ENCODE measurements at regions of chr13 and their contacts with region 1.

Region 1: GRCh38 chr13:20828539-20829364 is 55.0 kb upstream of the EEF1AKMT1 start:
- DNase-seq: peak; percentile 3 to 40
- ATAC-seq: peak; percentile 44 to 54; a peak in 2 of 6 replicates
- H3K4me3 ChIP-seq: peak overlapping the region; percentile 30; the same call in 2 of the 3 replicates
- H3K27ac ChIP-seq: peak overlapping the region; percentile 13 to 39; a peak in 2 of 6 replicates
- H3K4me1 ChIP-seq: 0 out of 3 replicates have a peak, but pooled peaks cover 3% of the 10 kb centered on the region
- CTCF ChIP-seq: peak; percentile 66
- EP300 ChIP-seq: no peak
- POLR2A ChIP-seq: no peak
- RAD21 ChIP-seq: peak; percentile 57 to 58; a peak in 4 of 5 replicates

Region 2: GRCh38 chr13:20696073-20696472 is 132.7 kb before region 1 on chr13:
- CTCF ChIA-PET with region 1: no interaction called
- POLR2A ChIA-PET with region 1: no interaction called
- DNase-seq: no peak
- ATAC-seq: no peak
- H3K4me3 ChIP-seq: no peak overlapping the region
- H3K27ac ChIP-seq: no peak overlapping the region
- H3K4me1 ChIP-seq: no peaks in the 10 kb centered on the region
- CTCF ChIP-seq: no peak
- EP300 ChIP-seq: no peak
- POLR2A ChIP-seq: no peak
- RAD21 ChIP-seq: no peak

Region 3: GRCh38 chr13:20713751-20714150 is 115.0 kb before region 1 on chr13:
- CTCF ChIA-PET with region 1: interaction called, 11 read pairs
- POLR2A ChIA-PET with region 1: no interaction called
- DNase-seq: no peak
- ATAC-seq: no peak
- H3K4me3 ChIP-seq: no peak overlapping the region
- H3K27ac ChIP-seq: no peak overlapping the region
- H3K4me1 ChIP-seq: peaks cover 10% of the 10 kb centered on the region; the same call in 2 of the 3 replicates
- CTCF ChIP-seq: no peak
- EP300 ChIP-seq: no peak
- POLR2A ChIP-seq: no peak
- RAD21 ChIP-seq: no peak

Region 4: GRCh38 chr13:20814224-20814910 is 14.4 kb before region 1 on chr13:
- CTCF ChIA-PET with region 1: interaction called, 15 read pairs
- POLR2A ChIA-PET with region 1: no interaction called
- DNase-seq: peak; percentile 18 to 46
- ATAC-seq: peak; percentile 90 to 92
- H3K4me3 ChIP-seq: no peak overlapping the region
- H3K27ac ChIP-seq: 0 out of 6 replicates have a peak overlapping the region, but pooled peaks of 1 of the 2 experiments have one; percentile 17
- H3K4me1 ChIP-seq: peaks cover 38% of the 10 kb centered on the region
- CTCF ChIP-seq: no peak
- EP300 ChIP-seq: no peak
- POLR2A ChIP-seq: no peak
- RAD21 ChIP-seq: no peak

Region 5: DNA sequence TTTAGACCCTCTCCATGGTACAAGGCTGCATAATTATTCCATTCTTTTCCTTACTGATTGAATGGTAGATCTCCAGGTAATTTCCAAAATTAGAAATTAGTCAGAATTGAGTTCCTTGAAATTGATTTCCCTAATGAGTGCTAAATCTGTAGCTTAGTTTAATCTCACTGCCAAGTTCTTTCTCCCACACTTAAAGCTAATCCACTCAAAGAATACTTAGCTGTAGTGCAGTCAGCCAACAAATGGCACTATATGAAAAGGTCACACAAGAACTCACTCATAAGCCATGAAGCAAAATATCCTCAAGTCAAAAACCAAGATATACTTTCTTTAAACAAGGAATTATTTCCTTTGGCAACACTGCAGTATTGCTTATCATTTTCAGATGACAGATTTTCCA is 11.8 kb after region 1 on chr13:
- CTCF ChIA-PET with region 1: interaction called, 14 read pairs
- POLR2A ChIA-PET with region 1: no interaction called
- DNase-seq: no peak
- ATAC-seq: no peak
- H3K4me3 ChIP-seq: no peak overlapping the region
- H3K27ac ChIP-seq: no peak overlapping the region
- H3K4me1 ChIP-seq: no peaks in the 10 kb centered on the region
- CTCF ChIP-seq: no peak
- EP300 ChIP-seq: no peak
- POLR2A ChIP-seq: no peak
- RAD21 ChIP-seq: no peak

Region 6: GRCh38 chr13:21232196-21232595 is 403.4 kb after region 1 on chr13:
- CTCF ChIA-PET with region 1: no interaction called
- POLR2A ChIA-PET with region 1: no interaction called
- DNase-seq: no peak
- ATAC-seq: no peak
- H3K4me3 ChIP-seq: no peak overlapping the region
- H3K27ac ChIP-seq: no peak overlapping the region
- H3K4me1 ChIP-seq: no peaks in the 10 kb centered on the region
- CTCF ChIP-seq: no peak
- EP300 ChIP-seq: no peak
- POLR2A ChIP-seq: no peak
- RAD21 ChIP-seq: no peak

Region 7: GRCh38 chr13:21389124-21389523 is 560.4 kb after region 1 on chr13:
- CTCF ChIA-PET with region 1: no interaction called
- POLR2A ChIA-PET with region 1: no interaction called
- DNase-seq: no peak
- ATAC-seq: no peak
- H3K4me3 ChIP-seq: no peak overlapping the region
- H3K27ac ChIP-seq: no peak overlapping the region
- H3K4me1 ChIP-seq: no peaks in the 10 kb centered on the region
- CTCF ChIP-seq: no peak
- EP300 ChIP-seq: no peak
- POLR2A ChIP-seq: no peak
- RAD21 ChIP-seq: no peak